Cardiac septum (tissue), 1 donor: ENCODE measurements at regions of chr3 and their contacts with region 1.

Region 1: GRCh38 chr3:23490459-23490858 is 287.3 kb downstream of the UBE2E2 start:
- DNase-seq: no peak

Region 2: DNA sequence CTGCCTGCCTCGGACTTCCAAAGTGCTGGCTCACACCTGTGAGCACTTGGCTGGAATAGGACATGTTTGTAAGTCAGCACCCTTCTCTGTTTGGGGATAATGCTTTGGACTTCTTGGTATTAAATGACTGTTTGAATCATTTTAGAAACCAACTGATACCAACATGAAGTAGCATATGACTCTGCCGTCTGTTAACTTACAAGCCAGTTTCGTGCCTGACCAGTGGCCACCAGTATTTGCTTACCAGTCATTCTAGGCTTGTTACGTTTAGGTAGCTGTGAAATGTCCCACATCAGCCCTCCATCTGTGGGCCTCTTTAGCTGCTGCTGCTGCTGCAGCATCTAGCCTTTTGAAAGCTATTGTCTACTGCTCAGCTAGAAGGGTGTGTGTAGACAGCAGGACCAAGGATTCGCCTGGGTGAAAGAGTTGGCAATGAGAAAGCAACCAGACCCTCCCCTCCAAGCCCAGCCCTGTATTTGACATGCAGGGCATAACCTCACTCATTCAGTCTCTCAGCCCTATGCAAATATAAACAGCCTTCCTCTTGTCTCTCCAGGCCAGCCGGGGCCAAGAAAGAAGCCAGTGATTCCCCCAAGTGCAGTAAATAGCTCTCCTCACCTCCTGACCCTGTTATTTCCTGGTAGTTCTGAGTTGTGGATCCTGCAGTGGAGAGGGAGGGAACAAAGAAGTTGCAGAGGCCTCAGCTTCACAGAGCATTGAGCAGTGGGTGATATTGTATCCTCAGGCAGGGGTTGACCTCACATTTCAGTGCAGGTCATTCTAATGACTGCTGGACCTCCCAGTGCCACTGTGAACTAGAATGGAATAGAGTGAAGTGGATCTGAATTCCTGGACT is 375.4 kb after region 1 on chr3:
- intact Hi-C with region 1: loop called (anchors 5 kb)
- DNase-seq: no peak